ENCODE measurements at regions of chr3 and their contacts with region 1.

Region 1: DNA sequence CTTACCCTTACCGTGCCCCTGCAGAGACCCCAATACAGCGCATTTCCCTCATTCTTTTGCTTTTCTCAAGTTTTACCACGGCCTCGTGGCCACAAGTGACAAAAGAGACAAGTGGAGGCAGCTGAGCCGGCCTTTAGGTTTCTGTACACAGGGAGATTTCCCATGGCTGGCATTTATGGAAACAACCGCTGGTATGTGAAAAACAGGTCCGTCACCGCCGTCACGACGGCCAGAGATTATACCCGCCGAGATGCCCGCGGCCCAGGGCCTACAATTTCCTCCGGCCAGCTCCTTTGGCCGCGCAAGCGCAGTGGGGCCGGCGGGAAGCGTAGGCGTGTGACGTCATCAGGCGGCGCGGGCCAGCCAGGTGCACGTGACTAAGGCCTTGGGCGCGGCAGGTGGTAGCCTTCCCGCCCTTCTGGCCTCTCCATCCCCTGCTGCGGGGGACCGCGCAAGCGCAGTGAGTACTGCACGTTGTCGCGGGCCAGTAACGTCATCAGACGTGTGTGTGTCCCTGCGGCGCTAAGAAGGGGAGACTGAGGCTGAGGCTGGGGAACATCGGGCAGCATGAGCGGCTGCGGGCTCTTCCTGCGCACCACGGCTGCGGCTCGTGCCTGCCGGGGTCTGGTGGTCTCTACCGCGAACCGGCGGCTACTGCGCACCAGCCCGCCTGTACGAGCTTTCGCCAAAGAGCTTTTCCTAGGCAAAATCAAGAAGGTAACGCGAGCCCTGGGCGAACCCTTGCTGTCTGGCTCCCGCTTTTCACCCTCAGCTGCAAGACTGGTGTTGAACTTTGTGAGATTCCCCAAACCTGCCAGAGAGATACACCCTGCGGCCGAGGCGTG is at the start of gene ACAD9:
- DNase-seq: peak; percentile 97 to 98 (median 97)
- H3K4me3 ChIP-seq: peak within 1 kb of the TSS; percentile 63 to 99 (median 85)
- H3K27ac ChIP-seq: peak within 1 kb of the TSS; percentile 97
- H3K4me1 ChIP-seq: peaks cover 8 to 50% (median 40%) of the 10 kb centered on the region in 4 experiments
- H3K27me3 ChIP-seq: no peaks in the 10 kb centered on the region

Region 2: DNA sequence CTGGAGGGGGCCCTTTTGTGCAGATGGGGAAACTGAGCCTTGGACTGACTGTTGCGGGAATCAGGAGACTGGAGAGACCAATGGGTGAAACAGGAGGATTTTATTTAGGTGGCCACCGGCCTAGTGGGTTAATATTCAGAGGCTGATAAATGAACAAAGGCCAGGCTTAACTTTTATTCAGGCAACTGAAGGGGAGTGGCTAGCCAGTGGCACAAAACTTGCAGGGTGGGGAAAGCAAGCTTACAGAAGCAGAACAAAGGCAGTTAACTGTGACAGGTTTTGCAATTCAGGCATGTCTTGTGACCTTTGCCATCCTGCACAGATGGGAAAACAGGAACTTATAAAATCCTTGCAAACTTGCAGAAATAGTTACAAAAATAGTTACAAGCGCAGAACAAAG is 24.9 kb before region 1 on chr3:
- CTCF ChIA-PET with region 1: interaction called, 12 read pairs
- POLR2A ChIA-PET with region 1: no interaction called
- DNase-seq: peak in 2 of 3 donors; percentile 22 to 44
- H3K4me3 ChIP-seq: peak overlapping the region in 1 of 7 experiments; percentile 6
- H3K27ac ChIP-seq: no peak overlapping the region
- H3K4me1 ChIP-seq: peaks cover 0 to 13% (median 0%) of the 10 kb centered on the region in 4 experiments
- H3K27me3 ChIP-seq: no peaks in the 10 kb centered on the region

Region 3: GRCh38 chr3:128864351-128864811 is 15.0 kb before region 1 on chr3:
- CTCF ChIA-PET with region 1: interaction called, 34 read pairs
- POLR2A ChIA-PET with region 1: interaction called, 3 read pairs
- DNase-seq: peak; percentile 35 to 76 (median 63)
- H3K4me3 ChIP-seq: peak overlapping the region in 4 of 7 experiments; percentile 15 to 36 (median 28)
- H3K27ac ChIP-seq: peak overlapping the region in 1 of 2 experiments; percentile 49
- H3K4me1 ChIP-seq: peaks cover 0 to 23% (median 20%) of the 10 kb centered on the region in 4 experiments
- H3K27me3 ChIP-seq: no peaks in the 10 kb centered on the region

Region 4: GRCh38 chr3:128922804-128923459 is 43.6 kb after region 1 on chr3:
- CTCF ChIA-PET with region 1: interaction called, 23 read pairs
- POLR2A ChIA-PET with region 1: no interaction called
- DNase-seq: peak; percentile 20 to 83 (median 80)
- H3K4me3 ChIP-seq: peak overlapping the region in 4 of 7 experiments; percentile 1 to 64 (median 28)
- H3K27ac ChIP-seq: no peak overlapping the region
- H3K4me1 ChIP-seq: peaks cover 0 to 17% (median 14%) of the 10 kb centered on the region in 4 experiments
- H3K27me3 ChIP-seq: no peaks in the 10 kb centered on the region

Measured in common myeloid progenitor, CD34-positive (primary cell).